Natural killer cell (primary cell): ENCODE measurements at regions of chr11 and their contacts with region 1.

Region 1: GRCh38 chr11:65117216-65118096 is at the start of gene ZNHIT2:
- DNase-seq: peak; percentile 100
- ATAC-seq: peak; percentile 74 to 89 (median 77)
- H3K4me3 ChIP-seq: peak within 1 kb of the TSS; percentile 75
- H3K4me3 Mint-ChIP-seq: peak within 1 kb of the TSS; percentile 86
- H3K27ac ChIP-seq: peak within 1 kb of the TSS; percentile 87
- H3K27ac Mint-ChIP-seq: peak within 1 kb of the TSS; percentile 88 to 99
- H3K4me1 ChIP-seq: peaks cover 55% of the 10 kb centered on the region
- H3K4me1 Mint-ChIP-seq: peaks cover 37 to 50% of the 10 kb centered on the region in 2 donors
- H3K27me3 ChIP-seq: no peaks in the 10 kb centered on the region
- H3K27me3 Mint-ChIP-seq: no peaks in the 10 kb centered on the region
- CTCF ChIP-seq: peak; percentile 83
- total RNA-seq, gene ZNHIT2: 5.6 to 6.8 (median 6.1) TPM

Region 2: GRCh38 chr11:64778508-64779346 is 338.7 kb before region 1 on chr11 and contains the start of gene SF1:
- intact Hi-C with region 1: loop called (anchors 10 kb)
- DNase-seq: peak; percentile 97 to 100
- ATAC-seq: peak; percentile 79 to 92 (median 81)
- H3K4me3 ChIP-seq: peak within 1 kb of the TSS; percentile 64
- H3K4me3 Mint-ChIP-seq: peak within 1 kb of the TSS; percentile 95
- H3K27ac ChIP-seq: peak within 1 kb of the TSS; percentile 98
- H3K27ac Mint-ChIP-seq: peak within 1 kb of the TSS; percentile 97 to 100
- H3K4me1 ChIP-seq: peaks cover 28% of the 10 kb centered on the region
- H3K4me1 Mint-ChIP-seq: peaks cover 43 to 46% of the 10 kb centered on the region in 2 donors
- H3K27me3 ChIP-seq: no peaks in the 10 kb centered on the region
- H3K27me3 Mint-ChIP-seq: no peaks in the 10 kb centered on the region
- CTCF ChIP-seq: no peak
- total RNA-seq, gene SF1: 841 to 864 (median 845) TPM

Region 3: GRCh38 chr11:64916775-64917662 is 200.4 kb before region 1 on chr11 and contains the start of gene ATG2A:
- intact Hi-C with region 1: loop called (anchors 5 kb)
- DNase-seq: peak; percentile 99
- ATAC-seq: peak; percentile 87 to 98 (median 91)
- H3K4me3 ChIP-seq: peak within 1 kb of the TSS; percentile 91
- H3K4me3 Mint-ChIP-seq: peak within 1 kb of the TSS; percentile 88
- H3K27ac ChIP-seq: peak within 1 kb of the TSS; percentile 89
- H3K27ac Mint-ChIP-seq: peak within 1 kb of the TSS; percentile 91 to 96
- H3K4me1 ChIP-seq: peaks cover 31% of the 10 kb centered on the region
- H3K4me1 Mint-ChIP-seq: peaks cover 15 to 28% of the 10 kb centered on the region in 2 donors
- H3K27me3 ChIP-seq: no peaks in the 10 kb centered on the region
- H3K27me3 Mint-ChIP-seq: no peaks in the 10 kb centered on the region
- CTCF ChIP-seq: no peak
- total RNA-seq, gene ATG2A: 165 to 321 (median 259) TPM

Region 4: DNA sequence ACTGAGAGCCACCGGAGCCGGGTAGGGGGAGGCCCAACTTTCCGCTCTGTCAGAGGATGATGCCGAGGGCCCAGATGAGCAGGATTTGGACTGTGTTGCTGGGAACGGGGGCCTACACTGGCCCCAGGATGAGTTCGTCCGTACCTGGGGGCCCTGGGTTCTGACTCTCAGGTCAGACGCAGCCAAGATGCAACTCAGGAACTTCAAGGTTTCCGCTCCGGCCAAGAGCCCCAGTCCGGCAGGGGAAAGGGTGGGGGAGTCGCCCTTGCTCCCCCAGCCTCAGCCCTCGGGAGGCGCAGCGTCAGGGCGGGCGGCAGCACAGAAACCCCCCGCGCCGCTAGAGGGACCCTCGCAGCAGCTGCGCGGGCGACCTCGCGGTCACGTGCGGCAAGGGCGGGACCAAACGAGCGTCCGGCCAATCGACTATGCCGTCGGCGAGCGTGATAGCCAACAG is 103.7 kb before region 1 on chr11:
- intact Hi-C with region 1: loop called (anchors 1 kb)
- DNase-seq: peak in 1 of 2 donors; percentile 94
- ATAC-seq: peak; percentile 85 to 94 (median 87)
- H3K4me3 ChIP-seq: peak overlapping the region; percentile 93
- H3K4me3 Mint-ChIP-seq: peak overlapping the region; percentile 95
- H3K27ac ChIP-seq: peak overlapping the region; percentile 100
- H3K27ac Mint-ChIP-seq: peak overlapping the region; percentile 95 to 96
- H3K4me1 ChIP-seq: peaks cover 26% of the 10 kb centered on the region
- H3K4me1 Mint-ChIP-seq: peaks cover 21 to 29% of the 10 kb centered on the region in 2 donors
- H3K27me3 ChIP-seq: no peaks in the 10 kb centered on the region
- H3K27me3 Mint-ChIP-seq: no peaks in the 10 kb centered on the region
- CTCF ChIP-seq: no peak

Region 5: GRCh38 chr11:65083834-65084597 is 33.4 kb before region 1 on chr11 and contains the starts of genes CDCA5 and ZFPL1:
- intact Hi-C with region 1: loop called (anchors 1 kb)
- DNase-seq: peak; percentile 98 to 99
- ATAC-seq: peak; percentile 90 to 93 (median 92)
- H3K4me3 ChIP-seq: peak within 1 kb of the TSS; percentile 81
- H3K4me3 Mint-ChIP-seq: peak within 1 kb of the TSS; percentile 94
- H3K27ac ChIP-seq: peak within 1 kb of the TSS; percentile 96
- H3K27ac Mint-ChIP-seq: peak within 1 kb of the TSS; percentile 98 to 100
- H3K4me1 ChIP-seq: peaks cover 16% of the 10 kb centered on the region
- H3K4me1 Mint-ChIP-seq: peaks cover 27 to 31% of the 10 kb centered on the region in 2 donors
- H3K27me3 ChIP-seq: no peaks in the 10 kb centered on the region
- H3K27me3 Mint-ChIP-seq: no peaks in the 10 kb centered on the region
- CTCF ChIP-seq: no peak
- total RNA-seq, gene CDCA5: 3.3 to 6.8 (median 3.8) TPM
- total RNA-seq, gene ZFPL1: 49.8 to 60.2 (median 50.8) TPM

Region 6: DNA sequence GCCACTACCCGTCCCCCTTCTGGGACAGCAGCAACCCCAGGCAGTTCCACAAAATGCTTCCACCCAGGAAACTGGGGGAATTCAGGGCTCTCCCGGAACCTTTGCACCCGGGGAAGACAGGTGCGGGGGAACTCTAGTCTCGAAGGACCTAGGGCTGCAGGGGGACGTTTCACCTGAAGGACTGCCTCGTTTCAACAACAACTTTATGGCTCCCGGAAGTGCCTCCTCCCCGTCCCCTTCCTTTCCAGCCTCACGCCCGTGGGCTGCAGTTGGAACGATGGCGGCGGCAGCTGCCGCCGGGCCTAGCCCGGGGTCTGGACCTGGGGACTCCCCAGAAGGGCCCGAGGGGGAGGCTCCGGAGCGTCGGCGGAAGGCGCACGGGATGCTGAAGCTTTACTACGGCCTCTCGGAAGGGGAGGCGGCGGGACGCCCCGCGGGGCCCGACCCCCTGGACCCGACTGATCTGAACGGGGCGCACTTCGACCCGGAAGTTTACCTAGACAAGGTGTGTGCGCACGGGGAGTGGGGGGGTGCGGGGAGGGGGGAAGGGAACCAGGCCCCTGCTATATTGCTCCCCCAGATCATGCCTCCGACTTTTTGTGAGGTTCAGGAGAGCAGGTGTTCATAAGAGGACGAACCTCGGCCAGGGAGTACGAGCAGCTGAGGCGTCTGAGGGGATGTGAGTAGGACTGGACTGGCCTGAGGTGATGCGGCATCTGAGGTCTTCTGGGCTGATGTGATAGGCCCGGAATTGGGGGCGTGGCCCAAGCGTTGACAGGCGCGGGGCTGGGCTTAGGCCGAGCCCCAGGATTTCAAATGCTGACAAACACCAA is 21.3 kb before region 1 on chr11 and contains the start of gene VPS51:
- intact Hi-C with region 1: loop called (anchors 1 kb)
- DNase-seq: peak; percentile 79 to 95
- ATAC-seq: peak; percentile 89 to 96 (median 92)
- H3K4me3 ChIP-seq: peak within 1 kb of the TSS; percentile 85
- H3K4me3 Mint-ChIP-seq: peak within 1 kb of the TSS; percentile 92
- H3K27ac ChIP-seq: peak within 1 kb of the TSS; percentile 76
- H3K27ac Mint-ChIP-seq: peak within 1 kb of the TSS; percentile 83 to 92
- H3K4me1 ChIP-seq: peaks cover 19% of the 10 kb centered on the region
- H3K4me1 Mint-ChIP-seq: peaks cover 0 to 14% of the 10 kb centered on the region in 2 donors
- H3K27me3 ChIP-seq: no peaks in the 10 kb centered on the region
- H3K27me3 Mint-ChIP-seq: no peaks in the 10 kb centered on the region
- CTCF ChIP-seq: no peak
- total RNA-seq, gene VPS51: 180 to 197 (median 184) TPM

Region 7: GRCh38 chr11:65134386-65135253 is 17.2 kb after region 1 on chr11 and contains the start of gene SYVN1:
- intact Hi-C with region 1: loop called (anchors 1 kb)
- DNase-seq: peak; percentile 91 to 95
- ATAC-seq: peak; percentile 82 to 92 (median 84)
- H3K4me3 ChIP-seq: peak within 1 kb of the TSS; percentile 92
- H3K4me3 Mint-ChIP-seq: peak within 1 kb of the TSS; percentile 98
- H3K27ac ChIP-seq: peak within 1 kb of the TSS; percentile 99
- H3K27ac Mint-ChIP-seq: peak within 1 kb of the TSS; percentile 99
- H3K4me1 ChIP-seq: peaks cover 53% of the 10 kb centered on the region
- H3K4me1 Mint-ChIP-seq: peaks cover 32 to 52% of the 10 kb centered on the region in 2 donors
- H3K27me3 ChIP-seq: no peaks in the 10 kb centered on the region
- H3K27me3 Mint-ChIP-seq: no peaks in the 10 kb centered on the region
- CTCF ChIP-seq: no peak
- total RNA-seq, gene SYVN1: 72.9 to 109 (median 90.2) TPM